Activated CD4-positive, alpha-beta memory T cell treated with anti-CD3 and anti-CD28 coated beads for 36 hours (primary cell): ENCODE measurements at regions of chr1 and their contacts with region 1.

Region 1: GRCh38 chr1:204806943-204807687 is 63.5 kb upstream of the NFASC start:
- DNase-seq: peak; percentile 90
- H3K4me3 Mint-ChIP-seq: peak overlapping the region; percentile 78
- H3K27ac Mint-ChIP-seq: peak overlapping the region; percentile 38
- H3K4me1 Mint-ChIP-seq: no peaks in the 10 kb centered on the region
- H3K27me3 Mint-ChIP-seq: no peaks in the 10 kb centered on the region

Region 2: DNA sequence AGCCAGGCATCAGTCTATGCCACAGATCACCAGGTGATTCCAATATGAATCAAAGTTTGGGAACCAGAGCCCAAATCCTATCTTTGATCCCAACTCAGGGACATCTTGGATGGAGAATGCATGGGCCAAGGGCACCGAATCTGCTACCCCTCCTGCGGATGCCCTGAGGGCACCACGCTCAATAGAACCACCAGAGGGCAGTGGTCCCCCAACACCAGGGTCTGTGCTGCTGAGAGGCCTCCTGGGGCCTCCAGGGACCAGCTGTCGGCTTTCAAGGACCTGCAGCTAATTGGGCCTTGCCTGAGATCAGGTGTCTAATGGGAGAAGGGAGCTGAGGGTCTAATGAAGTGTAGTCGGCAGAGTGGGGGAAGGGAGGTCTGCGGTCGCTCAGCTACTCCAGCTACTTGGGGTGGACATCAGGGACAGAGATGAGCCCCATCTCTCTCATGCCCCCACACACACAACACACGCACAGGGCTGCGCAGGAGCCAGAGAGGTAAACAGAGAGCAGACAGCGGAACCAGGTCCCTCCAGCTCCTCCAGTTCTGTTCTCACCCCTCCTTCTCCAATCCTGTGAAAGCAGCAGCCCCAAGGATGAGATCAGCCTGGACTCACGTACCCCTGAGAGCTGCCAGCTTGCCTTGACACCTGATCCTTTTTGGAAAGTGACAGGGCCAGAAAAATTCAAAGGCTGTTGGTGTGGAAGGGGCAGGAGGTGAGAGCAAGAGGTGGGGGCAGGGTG is 360.6 kb before region 1 on chr1:
- CTCF ChIA-PET with region 1: interaction called, 13 read pairs
- POLR2A ChIA-PET with region 1: no interaction called
- intact Hi-C with region 1: no loop called
- DNase-seq: peak; percentile 86
- H3K4me3 Mint-ChIP-seq: no peak overlapping the region
- H3K27ac Mint-ChIP-seq: peak overlapping the region; percentile 76
- H3K4me1 Mint-ChIP-seq: peaks cover 77% of the 10 kb centered on the region
- H3K27me3 Mint-ChIP-seq: no peaks in the 10 kb centered on the region

Region 3: GRCh38 chr1:204516180-204516879 is 290.8 kb before region 1 on chr1 and contains the start of gene MDM4:
- CTCF ChIA-PET with region 1: interaction called, 15 read pairs
- POLR2A ChIA-PET with region 1: no interaction called
- intact Hi-C with region 1: no loop called
- DNase-seq: peak; percentile 97
- H3K4me3 Mint-ChIP-seq: no peak within 1 kb of the TSS
- H3K27ac Mint-ChIP-seq: no peak within 1 kb of the TSS
- H3K4me1 Mint-ChIP-seq: peaks cover 52% of the 10 kb centered on the region
- H3K27me3 Mint-ChIP-seq: no peaks in the 10 kb centered on the region
- total RNA-seq, gene MDM4: 88.0 to 90.8 TPM

Region 4: DNA sequence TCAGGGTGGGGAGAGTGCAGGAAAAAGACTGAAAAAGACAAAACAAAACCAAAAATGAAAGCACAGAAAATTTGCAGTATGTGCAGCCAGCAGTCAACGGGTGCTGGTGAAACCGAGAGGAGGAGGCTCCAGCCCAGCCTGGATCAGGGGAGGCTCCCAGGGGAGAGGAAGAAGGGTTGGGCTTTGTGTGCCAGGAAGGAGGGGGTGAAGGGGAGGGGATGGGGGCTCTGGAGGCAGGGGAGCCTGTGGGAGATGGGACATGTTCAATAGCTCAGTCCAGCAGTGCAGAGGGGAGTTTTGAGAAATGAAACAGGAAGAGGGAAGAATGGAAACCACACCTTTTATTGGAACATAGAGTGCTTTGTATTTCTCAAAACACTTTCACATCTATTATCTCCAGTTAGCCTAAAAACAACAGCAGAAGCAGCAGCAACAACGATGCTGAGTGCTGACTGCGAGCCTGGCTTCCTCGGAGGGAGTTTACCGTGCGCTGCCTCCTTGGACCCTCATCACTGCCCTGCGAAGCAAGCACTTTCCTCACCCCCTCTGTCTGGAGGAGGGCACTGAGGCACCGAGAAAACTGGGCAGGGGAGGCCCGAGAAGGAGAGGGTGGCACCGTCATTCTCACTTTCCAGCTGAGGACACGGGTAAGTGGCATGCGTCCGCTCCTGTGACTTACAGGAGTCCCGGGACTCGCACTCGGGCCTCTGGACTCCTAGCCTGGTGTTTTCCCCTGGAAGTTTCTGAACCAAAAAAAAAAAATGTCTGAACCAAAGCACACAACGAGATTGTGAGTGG is 228.0 kb before region 1 on chr1:
- CTCF ChIA-PET with region 1: interaction called, 22 read pairs
- POLR2A ChIA-PET with region 1: no interaction called
- intact Hi-C with region 1: no loop called
- DNase-seq: peak; percentile 62
- H3K4me3 Mint-ChIP-seq: peak overlapping the region; percentile 64
- H3K27ac Mint-ChIP-seq: peak overlapping the region; percentile 73
- H3K4me1 Mint-ChIP-seq: peaks cover 27% of the 10 kb centered on the region
- H3K27me3 Mint-ChIP-seq: no peaks in the 10 kb centered on the region

Region 5: GRCh38 chr1:204746838-204747442 is 60.2 kb before region 1 on chr1:
- CTCF ChIA-PET with region 1: interaction called, 31 read pairs
- POLR2A ChIA-PET with region 1: no interaction called
- intact Hi-C with region 1: no loop called
- DNase-seq: peak; percentile 62
- H3K4me3 Mint-ChIP-seq: no peak overlapping the region
- H3K27ac Mint-ChIP-seq: no peak overlapping the region
- H3K4me1 Mint-ChIP-seq: no peaks in the 10 kb centered on the region
- H3K27me3 Mint-ChIP-seq: peaks cover 23% of the 10 kb centered on the region

Region 6: DNA sequence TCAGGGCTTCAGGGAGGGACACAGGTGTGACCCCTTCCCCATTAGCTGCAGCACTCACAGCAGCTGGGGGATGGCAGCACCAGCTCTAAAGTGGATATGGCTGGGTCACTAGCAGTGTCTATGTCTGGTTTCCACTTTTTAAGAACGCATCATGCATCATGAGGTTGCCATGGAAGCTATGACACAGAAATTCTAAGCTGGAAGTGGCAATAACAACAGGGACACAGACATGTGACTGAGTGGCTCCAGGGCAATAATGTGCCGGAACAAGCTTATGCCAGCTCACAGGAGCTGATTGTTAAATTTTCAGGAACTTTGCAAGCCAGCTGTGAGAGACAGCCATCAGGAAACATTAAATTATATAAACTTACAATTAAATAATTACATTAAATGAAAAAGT is 12.4 kb after region 1 on chr1:
- CTCF ChIA-PET with region 1: interaction called, 110 read pairs
- POLR2A ChIA-PET with region 1: no interaction called
- intact Hi-C with region 1: no loop called
- DNase-seq: no peak
- H3K4me3 Mint-ChIP-seq: no peak overlapping the region
- H3K27ac Mint-ChIP-seq: no peak overlapping the region
- H3K4me1 Mint-ChIP-seq: no peaks in the 10 kb centered on the region
- H3K27me3 Mint-ChIP-seq: peaks cover 23% of the 10 kb centered on the region